Activated CD8-positive, alpha-beta T cell treated with anti-CD3 and anti-CD28 coated beads, Interleukin-2, amount 10 ng/mL, durations not matched to agents 7 days and 5 days (primary cell): ENCODE measurements at regions of chr12 and their contacts with region 1.

Region 1: DNA sequence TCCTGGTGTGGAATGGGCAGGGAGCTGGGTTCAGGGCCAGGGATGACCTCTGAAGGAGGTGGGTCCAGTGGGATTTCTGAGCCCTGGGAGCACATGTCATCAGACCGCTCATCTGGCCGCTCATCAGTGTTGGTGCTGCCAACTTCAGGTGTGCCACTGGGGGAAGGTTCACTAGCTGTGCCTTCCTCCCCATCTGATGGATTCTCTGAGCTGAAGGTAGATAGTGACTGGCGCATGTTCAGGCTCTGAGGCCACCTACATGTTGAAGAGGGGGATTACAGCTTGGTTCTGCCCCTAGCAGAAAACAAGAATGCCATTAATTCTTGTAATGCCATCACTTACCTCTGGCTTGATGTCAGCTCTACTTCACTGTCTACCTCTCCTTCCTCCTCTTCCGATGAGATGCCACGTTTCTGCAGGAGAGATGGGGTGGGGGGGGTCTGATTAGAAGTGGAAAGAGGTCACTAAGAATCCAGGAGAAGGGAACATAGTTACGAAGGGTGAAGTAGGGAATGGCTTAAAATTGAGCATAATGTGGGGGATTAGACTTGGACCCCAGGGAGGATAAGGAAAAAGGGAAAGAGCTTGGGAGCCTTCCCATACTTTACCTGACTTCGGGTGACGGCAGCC is 17.2 kb downstream of the MAP3K12 start:
- DNase-seq: no peak
- ATAC-seq: no peak
- H3K4me3 Mint-ChIP-seq: no peak overlapping the region
- H3K27ac Mint-ChIP-seq: no peak overlapping the region
- H3K4me1 Mint-ChIP-seq: peaks cover 5% of the 10 kb centered on the region
- H3K27me3 Mint-ChIP-seq: no peaks in the 10 kb centered on the region

Region 2: GRCh38 chr12:53500776-53501614 is 18.9 kb after region 1 on chr12 and contains the start of gene TARBP2:
- CTCF ChIA-PET with region 1: interaction called, 11 read pairs
- POLR2A ChIA-PET with region 1: interaction called, 14 read pairs
- DNase-seq: peak; percentile 97
- ATAC-seq: peak; percentile 84
- H3K4me3 Mint-ChIP-seq: peak within 1 kb of the TSS; percentile 81
- H3K27ac Mint-ChIP-seq: peak within 1 kb of the TSS; percentile 94
- H3K4me1 Mint-ChIP-seq: peaks cover 43% of the 10 kb centered on the region
- H3K27me3 Mint-ChIP-seq: no peaks in the 10 kb centered on the region
- total RNA-seq, gene TARBP2: 30.3 to 36.9 TPM

Region 3: GRCh38 chr12:53867216-53868001 is 385.3 kb after region 1 on chr12:
- CTCF ChIA-PET with region 1: no interaction called
- POLR2A ChIA-PET with region 1: no interaction called
- DNase-seq: no peak
- ATAC-seq: no peak
- H3K4me3 Mint-ChIP-seq: no peak overlapping the region
- H3K27ac Mint-ChIP-seq: no peak overlapping the region
- H3K4me1 Mint-ChIP-seq: no peaks in the 10 kb centered on the region
- H3K27me3 Mint-ChIP-seq: peaks cover 19% of the 10 kb centered on the region